ENCODE measurements at regions of chr2 and their contacts with region 1.

Region 1: GRCh38 chr2:120029672-120030628 is 17.1 kb downstream of the EPB41L5 start:
- DNase-seq: no peak
- ATAC-seq: no peak
- H3K4me3 ChIP-seq: no peak overlapping the region
- H3K27ac ChIP-seq: no peak overlapping the region
- H3K4me1 ChIP-seq: peaks cover 0 to 4% (median 0%) of the 10 kb centered on the region in 12 donors
- H3K27me3 ChIP-seq: no peaks in the 10 kb centered on the region
- CTCF ChIP-seq: no peak
- POLR2A ChIP-seq: no peak

Region 2: GRCh38 chr2:119264781-119265692 is 764.9 kb before region 1 on chr2:
- intact Hi-C with region 1: no loop called
- DNase-seq: peak in 2 of 5 donors; percentile 33 to 37
- ATAC-seq: peak; percentile 42 to 87 (median 82)
- H3K4me3 ChIP-seq: no peak overlapping the region
- H3K27ac ChIP-seq: no peak overlapping the region
- H3K4me1 ChIP-seq: peaks cover 0 to 17% (median 0%) of the 10 kb centered on the region in 12 donors
- H3K27me3 ChIP-seq: no peaks in the 10 kb centered on the region
- CTCF ChIP-seq: peak; percentile 52 to 82 (median 70)
- POLR2A ChIP-seq: no peak

Region 3: GRCh38 chr2:120044336-120044735 is 14.4 kb after region 1 on chr2:
- intact Hi-C with region 1: no loop called
- DNase-seq: no peak
- ATAC-seq: no peak
- H3K4me3 ChIP-seq: no peak overlapping the region
- H3K27ac ChIP-seq: peak overlapping the region in 1 of 12 donors; percentile 34
- H3K4me1 ChIP-seq: peaks cover 0 to 15% (median 3%) of the 10 kb centered on the region in 12 donors
- H3K27me3 ChIP-seq: no peaks in the 10 kb centered on the region
- CTCF ChIP-seq: no peak
- POLR2A ChIP-seq: no peak

Region 4: DNA sequence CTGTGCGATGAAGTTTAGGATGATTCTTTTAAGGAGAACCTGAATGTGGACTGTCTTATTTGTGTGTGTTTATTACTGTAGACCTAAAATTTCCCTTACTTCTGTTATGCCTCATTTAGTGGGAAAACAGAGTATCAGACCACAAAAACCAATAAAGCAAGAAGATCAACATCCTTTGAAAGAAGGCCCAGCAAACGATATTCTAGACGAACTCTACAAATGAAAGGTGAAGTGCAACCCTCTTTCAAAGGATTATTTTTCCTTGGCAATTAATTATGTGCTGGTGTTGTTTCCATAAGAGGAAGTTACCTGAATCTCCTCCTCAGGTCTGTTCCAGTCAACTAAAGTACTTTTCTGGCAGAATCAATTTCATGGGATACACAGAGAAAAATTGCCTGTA is 61.5 kb after region 1 on chr2:
- intact Hi-C with region 1: loop called in 1 of 10 experiments (anchors 2 kb)
- DNase-seq: no peak
- ATAC-seq: no peak
- H3K4me3 ChIP-seq: no peak overlapping the region
- H3K27ac ChIP-seq: no peak overlapping the region
- H3K4me1 ChIP-seq: no peaks in the 10 kb centered on the region
- H3K27me3 ChIP-seq: no peaks in the 10 kb centered on the region
- CTCF ChIP-seq: no peak
- POLR2A ChIP-seq: no peak